ENCODE measurements at regions of chr4 and their contacts with region 1.

Region 1: GRCh38 chr4:120922381-120923206 is at the start of gene PRDM5:
- DNase-seq: peak; percentile 79
- total RNA-seq, gene PRDM5: 24.3 TPM

Region 2: DNA sequence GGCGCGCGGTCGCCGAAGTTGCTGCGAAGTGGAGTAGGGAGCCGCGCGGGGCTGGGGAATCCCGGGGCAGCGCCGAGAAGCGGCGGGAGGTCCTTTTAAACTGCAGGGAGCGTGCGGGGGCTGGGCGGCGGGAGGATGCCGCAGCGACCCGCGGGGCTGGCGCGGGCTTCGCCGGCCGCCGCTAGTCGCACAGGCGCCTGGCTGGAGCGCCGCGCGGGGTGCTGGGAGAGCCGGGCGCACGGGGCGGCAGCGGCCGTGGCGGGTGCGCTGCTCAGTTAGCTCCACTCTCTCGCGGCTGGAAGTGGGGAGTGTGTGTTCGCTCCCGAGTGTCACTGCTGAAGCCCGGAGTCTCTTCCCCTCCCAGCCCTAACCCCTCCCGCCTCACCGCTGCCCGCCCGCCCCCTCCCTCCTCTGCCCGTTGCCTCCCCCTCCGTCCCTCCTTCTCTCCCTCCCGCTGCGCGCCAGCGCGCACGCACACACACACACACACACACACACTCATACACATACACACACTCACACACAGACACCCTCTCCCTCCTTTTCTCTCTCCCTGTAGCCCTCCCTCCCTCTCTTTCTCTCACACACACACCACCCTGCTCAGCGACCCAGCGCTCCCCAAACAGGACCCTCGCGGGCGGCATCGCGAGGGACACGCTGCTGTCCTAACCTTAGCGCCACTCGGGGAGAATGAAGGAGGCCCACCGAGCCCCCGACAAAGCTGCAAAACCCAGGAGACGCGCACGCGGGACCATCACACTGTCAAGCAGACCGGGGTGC is 149.8 kb after region 1 on chr4 and contains the start of gene NDNF:
- intact Hi-C with region 1: loop called (anchors 5 kb)
- DNase-seq: peak; percentile 78
- total RNA-seq, gene NDNF: 5.1 TPM

Region 3: GRCh38 chr4:121112530-121112929 is 189.9 kb after region 1 on chr4:
- intact Hi-C with region 1: no loop called
- DNase-seq: no peak

Measured in cardiac septum (tissue), 1 donor.